Naive thymus-derived CD4-positive, alpha-beta T cell (primary cell): ENCODE measurements at regions of chr1 and their contacts with region 1.

Region 1: DNA sequence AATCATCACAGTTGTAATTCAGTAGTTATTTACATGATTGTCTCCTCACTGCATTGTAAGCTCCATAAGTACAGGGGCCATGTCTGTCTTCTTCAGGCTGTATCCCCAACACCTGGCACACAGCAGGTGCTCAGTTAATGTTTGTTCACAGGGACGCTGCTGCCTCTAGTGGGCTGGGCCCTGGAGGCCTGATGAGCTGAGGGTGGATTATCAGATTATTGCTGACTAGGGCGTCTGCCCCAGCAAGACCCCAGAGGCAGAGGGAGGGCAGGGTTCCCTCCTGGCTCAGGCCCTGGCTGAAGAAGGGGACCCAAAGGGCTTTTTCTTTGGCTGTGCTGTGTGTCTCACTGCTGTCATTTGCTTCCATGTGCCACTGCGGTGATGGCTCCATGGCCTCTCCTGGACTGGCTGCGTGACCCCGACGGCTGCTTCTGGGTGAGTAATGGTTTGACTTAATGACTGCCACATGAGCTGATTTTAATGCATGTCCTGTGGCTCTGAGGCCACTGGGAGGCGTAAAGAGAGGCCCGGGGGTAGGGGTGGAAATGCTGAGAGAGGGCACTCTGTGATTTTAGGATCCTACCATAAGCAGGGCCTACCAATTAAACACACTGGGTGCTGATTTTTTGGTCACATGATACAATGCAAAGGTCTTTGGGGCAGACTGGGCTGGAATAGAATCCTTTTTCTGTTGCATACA is 20.8 kb upstream of the EPB41 start:
- DNase-seq: no peak
- ATAC-seq: peak; percentile 51
- H3K4me3 ChIP-seq: no peak overlapping the region
- H3K4me3 Mint-ChIP-seq: no peak overlapping the region
- H3K27ac ChIP-seq: no peak overlapping the region
- H3K27ac Mint-ChIP-seq: peak overlapping the region in 2 of 9 donors; percentile 27 to 33
- H3K4me1 ChIP-seq: no peaks in the 10 kb centered on the region
- H3K4me1 Mint-ChIP-seq: peaks cover 13 to 58% (median 31%) of the 10 kb centered on the region in 7 donors
- H3K27me3 ChIP-seq: no peaks in the 10 kb centered on the region
- H3K27me3 Mint-ChIP-seq: no peaks in the 10 kb centered on the region

Region 2: GRCh38 chr1:28983509-28984310 is 90.2 kb after region 1 on chr1:
- CTCF ChIA-PET with region 1: interaction called, 3 read pairs
- POLR2A ChIA-PET with region 1: no interaction called
- intact Hi-C with region 1: loop called in 1 of 2 experiments (anchors 1 kb)
- DNase-seq: peak in 2 of 9 donors; percentile 13 to 34
- ATAC-seq: peak; percentile 38
- H3K4me3 ChIP-seq: no peak overlapping the region
- H3K4me3 Mint-ChIP-seq: peak overlapping the region in 6 of 10 donors; percentile 16 to 45 (median 32)
- H3K27ac ChIP-seq: no peak overlapping the region
- H3K27ac Mint-ChIP-seq: peak overlapping the region in 3 of 9 donors; percentile 19 to 77 (median 57)
- H3K4me1 ChIP-seq: peaks cover 0 to 16% of the 10 kb centered on the region in 2 donors
- H3K4me1 Mint-ChIP-seq: peaks cover 28 to 83% (median 75%) of the 10 kb centered on the region in 7 donors
- H3K27me3 ChIP-seq: no peaks in the 10 kb centered on the region
- H3K27me3 Mint-ChIP-seq: no peaks in the 10 kb centered on the region